GM12878 (cell line): ENCODE measurements at regions of chr6 and their contacts with region 1.

Region 1: DNA sequence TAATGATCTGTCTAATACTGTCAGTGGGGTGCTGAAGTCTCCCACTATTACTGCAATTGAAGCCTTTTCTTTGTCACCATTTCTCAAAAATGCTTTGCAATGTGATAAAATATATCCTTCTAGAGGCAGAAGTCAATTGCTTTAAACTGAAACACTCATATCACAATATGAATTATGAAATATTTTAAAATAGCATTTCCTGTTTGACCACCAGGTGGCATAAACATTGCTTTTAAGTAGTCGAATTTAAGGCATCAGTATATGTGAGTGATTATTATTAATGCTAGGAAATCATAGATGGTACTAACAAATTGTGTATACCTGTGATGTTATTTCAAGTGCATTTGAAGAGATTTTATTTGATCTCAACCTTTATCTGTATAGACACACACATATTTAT is 87.5 kb downstream of the MEI4 start:
- DNase-seq: no peak
- ATAC-seq: peak; percentile 40; the same call in 2 of the 3 replicates
- H3K4me3 ChIP-seq: no peak overlapping the region
- H3K27ac ChIP-seq: no peak overlapping the region
- H3K4me1 ChIP-seq: no peaks in the 10 kb centered on the region
- H3K27me3 ChIP-seq: no peaks in the 10 kb centered on the region
- CTCF ChIP-seq: peak; percentile 19 to 51 (median 25); a peak in 5 of 6 replicates
- EP300 ChIP-seq: no peak
- POLR2A ChIP-seq: no peak
- RAD21 ChIP-seq: peak; percentile 29; the same call in 1 of the 2 replicates

Region 2: DNA sequence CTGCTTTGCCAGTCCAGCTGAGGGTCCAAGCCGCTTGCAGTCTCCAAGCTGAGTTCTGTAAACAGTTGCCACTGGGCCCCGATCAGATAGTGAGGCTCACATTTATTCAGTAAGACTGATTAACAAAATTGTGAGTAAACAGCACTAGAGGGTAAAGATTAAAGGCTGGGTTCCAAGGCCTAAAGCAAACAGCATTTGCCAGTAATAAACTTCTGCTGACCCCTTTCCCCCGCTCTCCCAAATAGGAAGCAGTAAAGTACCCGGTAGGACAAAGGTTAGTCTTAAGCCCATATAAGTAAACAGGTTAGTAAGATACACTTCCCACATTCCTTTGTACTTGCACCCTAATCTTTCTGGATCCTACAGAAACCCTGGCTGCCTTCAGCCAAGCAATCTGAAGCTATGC is 94.2 kb after region 1 on chr6:
- CTCF ChIA-PET with region 1: no interaction called
- POLR2A ChIA-PET with region 1: no interaction called
- RAD21 ChIA-PET with region 1: no interaction called
- SMC1A ChIA-PET with region 1: no interaction called
- in situ Hi-C with region 1: no loop called
- intact Hi-C with region 1: no loop called
- DNase-seq: no peak
- ATAC-seq: no peak
- H3K4me3 ChIP-seq: no peak overlapping the region
- H3K27ac ChIP-seq: no peak overlapping the region
- H3K4me1 ChIP-seq: no peaks in the 10 kb centered on the region
- H3K27me3 ChIP-seq: no peaks in the 10 kb centered on the region
- CTCF ChIP-seq: no peak
- EP300 ChIP-seq: no peak
- POLR2A ChIP-seq: no peak
- RAD21 ChIP-seq: no peak

Region 3: DNA sequence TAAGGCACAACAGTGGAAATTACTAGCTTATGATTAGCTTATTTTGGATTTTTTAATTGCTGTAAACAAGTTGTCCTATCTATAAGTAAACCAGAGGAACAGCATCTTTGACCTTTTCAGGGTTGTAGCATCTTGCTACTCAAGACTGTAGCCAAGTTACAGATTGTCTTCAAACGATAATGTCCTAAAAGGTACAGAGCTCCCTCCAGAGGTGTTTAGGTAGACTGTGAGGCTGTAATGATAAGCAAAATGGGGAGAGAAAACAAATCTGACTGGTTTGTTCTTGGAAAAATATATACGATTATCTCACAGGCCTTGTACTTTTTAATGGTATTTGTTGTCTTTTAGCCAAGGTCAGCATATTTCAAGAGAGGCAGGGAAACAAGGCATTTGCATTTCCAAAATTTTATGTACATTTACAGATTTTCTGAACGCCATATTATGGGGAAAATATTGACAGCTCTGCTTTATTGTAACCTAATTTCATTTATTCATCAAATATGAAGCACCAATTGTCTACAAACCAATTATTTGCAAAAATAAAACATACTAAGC is 185.9 kb after region 1 on chr6:
- CTCF ChIA-PET with region 1: interaction called, 31 read pairs
- POLR2A ChIA-PET with region 1: no interaction called
- RAD21 ChIA-PET with region 1: interaction called, 35 read pairs
- SMC1A ChIA-PET with region 1: interaction called, 14 read pairs
- in situ Hi-C with region 1: no loop called
- intact Hi-C with region 1: loop called (anchors 1 kb)
- DNase-seq: no peak
- ATAC-seq: peak; percentile 80
- H3K4me3 ChIP-seq: no peak overlapping the region
- H3K27ac ChIP-seq: no peak overlapping the region
- H3K4me1 ChIP-seq: no peaks in the 10 kb centered on the region
- H3K27me3 ChIP-seq: no peaks in the 10 kb centered on the region
- CTCF ChIP-seq: peak in 2 of 3 experiments; percentile 20 to 45; a peak in 3 of 6 replicates
- EP300 ChIP-seq: no peak
- POLR2A ChIP-seq: no peak
- RAD21 ChIP-seq: peak; percentile 58

Region 4: DNA sequence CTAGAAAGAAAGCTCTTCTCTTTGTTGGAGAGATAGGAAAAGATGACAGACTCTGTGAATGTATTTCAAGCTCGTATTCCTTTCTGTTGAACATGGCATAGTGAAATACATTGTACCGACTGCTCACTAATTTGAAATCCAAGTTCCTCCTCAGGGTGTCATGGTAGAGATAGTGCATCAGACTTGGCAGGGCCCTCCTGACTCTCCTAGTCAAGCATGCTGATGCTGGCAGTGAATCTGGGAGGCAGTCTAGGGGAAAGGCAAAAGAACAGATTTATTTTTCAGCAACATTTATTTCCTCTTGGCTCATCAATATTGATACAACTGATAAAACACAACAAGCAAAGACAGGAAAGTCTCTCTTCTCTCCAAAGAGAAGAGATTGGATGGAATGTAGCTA is 770.6 kb after region 1 on chr6:
- CTCF ChIA-PET with region 1: no interaction called
- POLR2A ChIA-PET with region 1: no interaction called
- RAD21 ChIA-PET with region 1: no interaction called
- SMC1A ChIA-PET with region 1: no interaction called
- in situ Hi-C with region 1: no loop called
- intact Hi-C with region 1: loop called (anchors 10 kb)
- DNase-seq: no peak
- ATAC-seq: no peak
- H3K4me3 ChIP-seq: no peak overlapping the region
- H3K27ac ChIP-seq: no peak overlapping the region
- H3K4me1 ChIP-seq: no peaks in the 10 kb centered on the region
- H3K27me3 ChIP-seq: no peaks in the 10 kb centered on the region
- CTCF ChIP-seq: no peak
- EP300 ChIP-seq: no peak
- POLR2A ChIP-seq: no peak
- RAD21 ChIP-seq: no peak